ENCODE measurements at regions of chr4 and their contacts with region 1.

Region 1: DNA sequence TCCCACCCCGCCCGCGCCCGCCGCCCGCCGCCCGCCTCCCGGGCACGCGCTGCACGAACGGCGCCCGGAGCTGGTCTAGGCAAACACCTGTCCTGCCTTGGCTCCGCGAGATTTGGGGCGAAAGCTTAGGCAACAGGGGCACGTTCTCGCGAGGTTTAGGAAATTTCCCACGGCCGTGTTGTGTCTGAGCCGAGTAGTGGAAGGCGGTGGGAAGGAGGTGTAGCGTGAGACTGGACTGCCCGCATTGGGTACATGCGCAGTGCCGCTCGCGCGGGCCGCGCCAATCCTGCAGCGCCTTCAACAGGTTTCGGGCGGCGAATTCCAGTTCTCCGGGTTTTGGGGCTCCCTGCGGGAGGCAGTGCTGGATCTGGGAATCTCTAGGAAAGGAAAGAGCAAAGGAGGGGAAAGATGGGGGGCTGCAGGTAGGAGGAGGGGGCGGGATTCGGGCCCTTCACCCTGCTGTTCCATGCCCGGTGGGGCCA is 1.3 kb upstream of the RBPJ start:
- DNase-seq: peak; percentile 96 to 99
- ATAC-seq: peak; percentile 83 to 85
- H3K4me3 ChIP-seq: peak overlapping the region; percentile 62 to 97 (median 83)
- H3K27ac ChIP-seq: peak overlapping the region; percentile 88 to 100 (median 97)
- H3K4me1 ChIP-seq: peaks cover 24 to 29% of the 10 kb centered on the region in 2 donors
- H3K27me3 ChIP-seq: no peaks in the 10 kb centered on the region
- CTCF ChIP-seq: no peak
- POLR2A ChIP-seq: no peak

Region 2: DNA sequence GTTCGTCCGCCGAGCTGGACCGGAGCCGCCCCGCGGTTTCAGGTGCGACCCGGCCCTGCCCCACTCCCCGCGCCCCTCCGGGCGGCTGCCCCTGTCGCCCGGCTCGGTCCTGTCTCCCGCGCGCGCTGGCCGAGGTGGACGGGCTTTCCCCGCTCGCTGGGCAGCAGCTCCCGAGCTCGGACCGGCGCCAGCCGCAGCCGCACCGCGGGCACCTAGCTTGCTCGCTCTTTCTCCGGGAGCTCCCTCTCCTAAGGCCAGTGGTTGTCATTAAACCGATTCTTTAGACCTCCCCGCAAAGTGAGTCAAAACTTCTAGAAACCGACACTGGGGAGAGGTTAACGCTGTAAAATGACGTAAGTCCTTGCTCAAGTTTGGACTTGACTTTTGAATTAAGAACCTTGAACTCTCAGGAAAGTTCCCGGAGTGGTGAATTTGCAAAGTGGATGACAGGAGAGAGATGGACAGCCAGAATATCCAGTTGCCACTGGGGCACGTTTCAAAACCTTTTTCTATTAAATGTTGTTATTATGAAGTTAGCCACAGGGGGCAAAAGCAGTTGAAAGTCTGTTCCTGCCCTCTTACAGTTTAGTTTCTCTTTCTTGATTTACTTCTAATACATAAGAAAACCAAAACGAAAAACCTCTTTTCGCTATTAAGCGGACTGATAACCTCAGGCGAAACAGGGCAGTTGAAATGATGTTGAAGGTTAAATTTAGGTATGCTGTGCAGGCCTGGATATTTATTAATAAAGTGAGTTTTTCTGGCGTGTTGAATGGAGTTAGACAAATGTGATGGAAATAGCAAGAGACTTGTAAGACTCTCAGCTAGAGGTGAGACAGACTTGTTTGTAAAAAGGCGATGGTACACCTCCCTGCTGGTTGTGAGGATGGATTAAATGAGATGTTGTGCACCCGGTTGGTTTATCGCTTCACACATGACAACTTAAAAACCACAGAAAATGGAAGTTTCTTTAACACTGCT is 1084.8 kb before region 1 on chr4:
- in situ Hi-C with region 1: no loop called
- intact Hi-C with region 1: loop called (anchors 10 kb)
- DNase-seq: peak; percentile 18 to 42
- ATAC-seq: peak; percentile 72 to 76
- H3K4me3 ChIP-seq: peak overlapping the region; percentile 78 to 92 (median 80)
- H3K27ac ChIP-seq: peak overlapping the region; percentile 89 to 98 (median 94)
- H3K4me1 ChIP-seq: peaks cover 3 to 11% of the 10 kb centered on the region in 2 donors
- H3K27me3 ChIP-seq: no peaks in the 10 kb centered on the region
- CTCF ChIP-seq: peak in 3 of 5 experiments; percentile 40 to 49 (median 42)
- POLR2A ChIP-seq: no peak

Region 3: DNA sequence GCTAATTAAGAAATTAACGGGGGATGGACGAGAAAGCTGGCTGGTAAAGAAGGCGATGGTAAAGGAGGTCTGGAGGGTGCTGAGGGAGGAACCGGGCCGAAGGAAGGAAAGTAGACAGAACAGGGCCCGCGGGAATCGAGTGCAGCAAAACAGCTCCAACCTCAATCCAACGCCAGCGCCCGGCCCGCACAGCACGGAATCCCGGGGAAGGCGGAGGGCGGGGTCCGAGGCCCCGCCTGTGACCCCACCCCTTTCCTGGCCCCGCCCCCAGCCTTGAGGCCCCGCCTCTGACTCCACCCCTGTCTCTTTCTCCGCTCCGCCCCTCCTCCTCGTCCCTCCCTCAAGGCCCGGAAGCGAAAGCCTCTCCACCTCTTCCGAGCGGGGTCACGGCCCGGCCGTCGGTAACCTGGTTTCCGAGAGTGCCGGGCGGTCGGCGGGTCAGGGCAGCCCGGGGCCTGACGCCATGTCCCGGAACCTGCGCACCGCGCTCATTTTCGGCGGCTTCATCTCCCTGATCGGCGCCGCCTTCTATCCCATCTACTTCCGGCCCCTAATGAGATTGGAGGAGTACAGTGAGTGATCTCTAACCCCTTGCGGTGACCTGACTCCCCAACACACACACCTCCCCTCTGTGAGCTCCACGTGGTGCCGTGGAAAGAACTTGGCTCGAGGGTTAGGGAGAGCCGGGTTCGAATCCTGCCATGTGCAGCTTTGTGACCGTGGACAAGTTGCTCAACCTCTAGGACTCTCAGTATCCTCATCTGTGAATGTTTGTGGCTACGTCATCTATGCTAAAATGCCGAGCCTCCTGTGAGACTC is 405.4 kb before region 1 on chr4 and contains the start of gene SMIM20:
- in situ Hi-C with region 1: no loop called
- intact Hi-C with region 1: loop called (anchors 1 kb)
- DNase-seq: peak; percentile 90 to 93
- ATAC-seq: peak; percentile 96 to 97
- H3K4me3 ChIP-seq: peak within 1 kb of the TSS; percentile 72 to 83 (median 76)
- H3K27ac ChIP-seq: peak within 1 kb of the TSS; percentile 87 to 97 (median 90)
- H3K4me1 ChIP-seq: peaks cover 14 to 15% of the 10 kb centered on the region in 2 donors
- H3K27me3 ChIP-seq: no peaks in the 10 kb centered on the region
- CTCF ChIP-seq: no peak
- POLR2A ChIP-seq: peak; percentile 77 to 78
- total RNA-seq, gene SMIM20: 36.4 to 59.4 (median 48.3) TPM

Region 4: GRCh38 chr4:25938787-25939186 is 380.7 kb before region 1 on chr4:
- in situ Hi-C with region 1: no loop called
- intact Hi-C with region 1: no loop called
- DNase-seq: peak; percentile 23 to 67
- ATAC-seq: peak; percentile 84 to 85
- H3K4me3 ChIP-seq: no peak overlapping the region
- H3K27ac ChIP-seq: peak overlapping the region in 1 of 4 donors; percentile 24
- H3K4me1 ChIP-seq: peaks cover 5 to 7% of the 10 kb centered on the region in 2 donors
- H3K27me3 ChIP-seq: no peaks in the 10 kb centered on the region
- CTCF ChIP-seq: no peak
- POLR2A ChIP-seq: no peak

Region 5: DNA sequence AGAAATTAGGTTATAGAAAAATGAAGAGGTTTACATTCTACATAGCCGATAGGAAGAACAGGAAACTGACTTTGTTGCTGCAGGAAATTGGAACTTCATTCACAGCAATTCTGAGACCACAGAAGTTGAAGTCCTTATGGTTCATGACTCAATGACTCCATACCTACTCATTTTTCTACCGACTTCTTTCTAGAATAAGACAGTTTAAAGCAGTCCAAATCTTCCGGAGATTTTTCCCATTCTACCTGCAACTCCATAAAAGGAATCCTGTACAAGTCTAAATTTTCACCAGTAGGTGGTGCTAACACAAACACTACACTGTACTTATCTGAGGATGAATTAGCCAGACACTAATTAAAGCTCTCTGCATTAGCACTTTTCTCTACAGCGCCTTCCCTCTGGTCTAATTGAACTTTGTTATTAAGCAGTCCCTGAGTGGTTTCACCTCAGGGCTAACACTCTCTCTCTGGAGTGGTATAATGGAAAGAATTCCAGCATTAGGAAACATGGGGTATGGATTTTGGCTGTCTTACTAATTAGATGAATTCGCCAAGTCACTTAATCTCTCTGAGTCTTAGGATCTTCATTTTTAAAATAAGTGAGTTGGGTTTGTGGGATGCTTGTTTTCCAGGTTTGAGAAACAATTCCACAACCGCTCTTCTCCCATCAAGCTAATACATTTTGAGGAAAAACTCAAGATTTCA is 237.6 kb before region 1 on chr4:
- in situ Hi-C with region 1: loop called in 3 of 4 experiments (anchors 10 kb)
- intact Hi-C with region 1: loop called (anchors 2 kb)
- DNase-seq: no peak
- ATAC-seq: peak in 1 of 2 donors; percentile 35
- H3K4me3 ChIP-seq: no peak overlapping the region
- H3K27ac ChIP-seq: no peak overlapping the region
- H3K4me1 ChIP-seq: peaks cover 29 to 35% of the 10 kb centered on the region in 2 donors
- H3K27me3 ChIP-seq: no peaks in the 10 kb centered on the region
- CTCF ChIP-seq: peak; percentile 22 to 67 (median 63)
- POLR2A ChIP-seq: no peak

Region 6: GRCh38 chr4:26529479-26529878 is 210.0 kb after region 1 on chr4:
- in situ Hi-C with region 1: no loop called
- intact Hi-C with region 1: no loop called
- DNase-seq: no peak
- ATAC-seq: no peak
- H3K4me3 ChIP-seq: no peak overlapping the region
- H3K27ac ChIP-seq: no peak overlapping the region
- H3K4me1 ChIP-seq: no peaks in the 10 kb centered on the region
- H3K27me3 ChIP-seq: no peaks in the 10 kb centered on the region
- CTCF ChIP-seq: no peak
- POLR2A ChIP-seq: no peak

Region 7: DNA sequence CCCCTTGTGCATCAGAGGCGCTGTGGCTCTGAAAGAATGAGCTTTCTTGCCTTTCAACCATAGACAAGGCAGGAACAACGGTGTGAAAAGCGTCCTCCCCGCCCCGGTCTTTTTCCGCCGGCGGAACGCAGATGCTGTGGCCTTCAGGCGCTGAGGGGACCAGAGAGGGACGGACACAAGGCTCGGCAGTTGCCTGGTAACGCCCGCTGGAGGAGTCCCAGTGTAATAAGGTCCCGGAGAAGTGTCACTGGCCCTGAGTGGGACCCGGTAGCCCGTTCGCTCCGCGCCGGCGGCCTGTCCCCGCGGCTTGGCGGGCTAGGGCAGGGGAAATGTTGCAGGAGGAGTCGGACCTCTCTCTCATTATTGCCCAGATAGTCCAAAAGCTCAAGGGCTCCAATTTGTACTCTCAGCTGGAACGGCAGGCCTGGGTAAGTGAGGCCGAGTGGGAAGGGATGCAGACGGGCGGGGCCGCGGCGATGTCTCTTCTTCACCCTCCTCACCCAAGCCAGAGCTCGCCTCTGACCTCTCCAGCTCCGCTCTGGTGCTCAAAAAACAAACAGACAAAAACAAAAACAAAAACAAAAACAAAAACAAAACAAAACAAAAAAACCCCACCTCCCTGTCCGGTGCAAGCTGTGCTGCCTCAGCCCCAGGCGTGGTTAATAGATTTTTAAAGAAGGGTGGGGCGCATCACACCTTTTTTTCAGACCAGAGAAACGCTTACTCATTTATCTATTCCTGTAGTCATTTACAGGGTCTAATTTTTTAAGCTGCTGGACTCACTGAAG is 264.6 kb after region 1 on chr4 and contains the start of gene TBC1D19:
- in situ Hi-C with region 1: no loop called
- intact Hi-C with region 1: loop called (anchors 10 kb)
- DNase-seq: peak; percentile 81 to 82
- ATAC-seq: peak; percentile 99 to 100
- H3K4me3 ChIP-seq: peak within 1 kb of the TSS; percentile 53 to 96 (median 67)
- H3K27ac ChIP-seq: peak within 1 kb of the TSS; percentile 64 to 84 (median 69)
- H3K4me1 ChIP-seq: peaks cover 6 to 9% of the 10 kb centered on the region in 2 donors
- H3K27me3 ChIP-seq: no peaks in the 10 kb centered on the region
- CTCF ChIP-seq: no peak
- POLR2A ChIP-seq: peak; percentile 23 to 35
- total RNA-seq, gene TBC1D19: 6.5 to 7.0 (median 6.8) TPM

Region 8: DNA sequence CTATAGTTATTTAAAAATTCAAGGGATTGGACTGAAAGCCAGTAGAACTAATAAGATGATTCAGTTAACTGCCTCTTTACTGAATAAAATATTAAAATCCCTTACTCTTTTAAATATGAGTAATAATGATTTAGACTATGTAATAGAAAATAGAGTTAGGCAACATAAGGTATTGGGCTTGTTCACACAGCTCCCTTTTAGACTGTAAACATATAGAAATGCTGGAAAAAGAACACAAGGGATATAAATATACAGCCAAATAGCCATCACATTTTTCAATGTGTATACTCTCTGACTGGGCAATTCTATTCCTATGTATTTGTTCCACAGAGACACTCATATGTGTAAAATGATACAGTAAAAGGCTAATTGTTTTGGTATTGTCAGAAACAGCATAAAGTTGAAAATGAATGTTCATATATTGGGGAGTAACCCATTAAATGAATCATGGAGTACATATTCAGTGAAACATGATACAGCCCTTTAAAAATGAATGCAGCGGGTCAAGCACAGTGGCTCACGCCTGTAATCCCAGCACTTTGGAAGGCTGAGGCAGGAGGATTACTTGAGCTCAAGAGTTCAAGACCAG is 394.1 kb after region 1 on chr4:
- in situ Hi-C with region 1: no loop called
- intact Hi-C with region 1: no loop called
- DNase-seq: no peak
- ATAC-seq: no peak
- H3K4me3 ChIP-seq: no peak overlapping the region
- H3K27ac ChIP-seq: no peak overlapping the region
- H3K4me1 ChIP-seq: no peaks in the 10 kb centered on the region
- H3K27me3 ChIP-seq: no peaks in the 10 kb centered on the region
- CTCF ChIP-seq: no peak
- POLR2A ChIP-seq: no peak